ENCODE measurements at regions of chr4 and their contacts with region 1.

Region 1: GRCh38 chr4:157978680-157979361 is 194.0 kb downstream of the GASK1B start:
- DNase-seq: peak; percentile 62 to 84
- ATAC-seq: peak; percentile 85
- H3K4me3 ChIP-seq: peak overlapping the region; percentile 26 to 69
- H3K27ac ChIP-seq: no peak overlapping the region
- H3K4me1 ChIP-seq: no peaks in the 10 kb centered on the region
- H3K27me3 ChIP-seq: no peaks in the 10 kb centered on the region

Region 2: DNA sequence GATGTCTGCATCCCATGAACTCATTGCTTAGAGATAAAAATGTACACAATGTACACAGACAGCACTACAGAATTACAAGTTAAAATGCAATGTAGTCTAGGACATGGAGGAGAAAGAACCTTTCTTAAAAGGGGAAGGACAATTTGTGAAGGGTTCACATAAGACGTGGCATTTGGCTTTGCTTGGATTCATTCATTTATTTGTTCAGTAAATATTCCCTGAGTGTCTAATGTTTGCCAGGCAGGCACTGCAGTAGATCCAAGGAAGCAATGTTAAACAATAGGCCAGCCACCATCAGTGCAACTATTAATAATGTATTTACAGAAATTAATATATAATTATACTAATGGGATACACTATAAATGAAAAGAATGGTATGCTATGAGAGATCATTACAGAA is 663.9 kb before region 1 on chr4:
- intact Hi-C with region 1: no loop called
- DNase-seq: no peak
- ATAC-seq: no peak
- H3K4me3 ChIP-seq: no peak overlapping the region
- H3K27ac ChIP-seq: no peak overlapping the region
- H3K4me1 ChIP-seq: peaks cover 0 to 2% of the 10 kb centered on the region in 2 donors
- H3K27me3 ChIP-seq: no peaks in the 10 kb centered on the region

Region 3: GRCh38 chr4:157643257-157643656 is 335.6 kb before region 1 on chr4:
- intact Hi-C with region 1: loop called in 1 of 2 experiments (anchors 5 kb)
- DNase-seq: no peak
- ATAC-seq: no peak
- H3K4me3 ChIP-seq: no peak overlapping the region
- H3K27ac ChIP-seq: no peak overlapping the region
- H3K4me1 ChIP-seq: peaks cover 1 to 3% of the 10 kb centered on the region in 2 donors
- H3K27me3 ChIP-seq: no peaks in the 10 kb centered on the region

Region 4: DNA sequence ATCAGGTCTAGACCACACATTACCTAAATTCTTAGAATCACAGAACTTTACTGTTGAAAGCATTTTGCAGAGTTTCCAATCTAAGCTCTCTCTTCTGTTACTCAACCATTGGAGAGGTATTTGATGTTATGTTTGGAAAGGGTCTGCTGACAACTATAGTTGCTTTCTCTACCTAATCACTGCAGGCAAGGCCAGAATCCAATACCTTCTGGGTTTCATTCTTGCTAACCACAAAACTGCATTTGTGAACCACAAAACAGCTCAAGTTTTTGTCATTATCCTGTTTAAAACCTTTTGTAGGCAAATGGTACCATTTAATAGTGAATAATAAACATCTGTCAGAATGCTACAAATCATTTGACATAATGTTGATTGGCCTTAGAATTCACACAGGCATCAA is 186.1 kb before region 1 on chr4:
- intact Hi-C with region 1: no loop called
- DNase-seq: no peak
- ATAC-seq: no peak
- H3K4me3 ChIP-seq: no peak overlapping the region
- H3K27ac ChIP-seq: no peak overlapping the region
- H3K4me1 ChIP-seq: peaks cover 3 to 5% of the 10 kb centered on the region in 2 donors
- H3K27me3 ChIP-seq: no peaks in the 10 kb centered on the region

Region 5: DNA sequence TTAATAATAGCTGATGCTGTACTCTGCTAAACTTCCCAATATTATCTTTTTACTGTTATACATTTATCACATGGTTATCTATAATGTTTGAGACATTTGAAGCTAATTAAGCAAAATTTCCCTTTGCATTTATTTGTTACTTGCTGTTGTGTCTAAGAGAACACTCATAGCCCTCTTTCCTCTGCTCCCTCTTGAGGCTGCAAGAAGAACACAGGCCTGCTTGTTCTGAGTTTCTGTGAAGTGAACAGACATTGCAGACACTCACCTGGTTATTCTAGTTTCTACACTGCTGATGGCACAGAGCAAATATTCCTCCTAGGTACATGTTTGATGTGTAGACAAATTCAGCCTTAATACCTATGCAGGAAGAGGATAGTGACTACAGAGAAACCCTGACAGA is 173.8 kb before region 1 on chr4:
- intact Hi-C with region 1: loop called in 1 of 2 experiments (anchors 5 kb)
- DNase-seq: no peak
- ATAC-seq: peak; percentile 62
- H3K4me3 ChIP-seq: no peak overlapping the region
- H3K27ac ChIP-seq: peak overlapping the region; percentile 5 to 90
- H3K4me1 ChIP-seq: peaks cover 1 to 9% of the 10 kb centered on the region in 2 donors
- H3K27me3 ChIP-seq: no peaks in the 10 kb centered on the region

Measured in aorta (tissue), 5 donors.